Endothelial cell of umbilical vein (primary cell): ENCODE measurements at regions of chr17 and their contacts with region 1.

Region 1: DNA sequence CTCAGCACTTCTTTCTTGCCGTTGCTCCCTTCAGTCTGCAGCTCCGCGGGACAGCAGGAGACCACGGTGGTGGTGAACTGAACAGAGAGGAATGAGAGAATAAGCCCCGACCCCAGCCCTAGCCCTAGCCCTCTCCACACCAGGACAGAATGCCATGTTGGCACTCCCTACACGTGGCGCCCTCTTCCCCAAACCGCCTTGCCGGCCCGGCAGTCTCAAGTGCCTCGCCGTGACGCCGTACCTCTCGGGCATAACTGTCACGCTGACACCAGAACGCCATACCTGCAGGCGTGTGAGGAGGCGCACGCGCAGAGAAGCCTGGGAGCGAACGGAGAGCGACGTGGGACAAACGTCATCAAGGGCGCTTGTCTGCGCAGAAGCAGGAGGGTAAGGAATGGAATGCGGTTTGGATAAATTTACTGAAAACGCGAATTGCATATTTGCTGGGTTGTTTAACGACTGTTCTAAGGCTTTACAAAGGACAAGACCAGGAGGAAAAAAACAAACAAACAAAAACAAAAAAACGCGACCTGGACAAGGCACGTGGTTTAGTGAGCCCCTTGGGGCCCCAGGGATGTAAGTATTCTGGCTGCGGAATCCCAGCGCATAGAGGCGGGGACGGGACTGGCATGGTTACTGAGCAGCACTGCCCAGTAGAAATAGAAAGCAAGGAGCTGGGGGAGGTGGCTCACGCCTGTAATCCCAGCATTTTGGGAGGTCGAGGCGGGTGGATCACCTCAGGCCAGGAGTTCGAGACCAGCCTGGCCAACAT is at the start of gene AARSD1:
- DNase-seq: peak; percentile 97
- H3K4me3 ChIP-seq: peak within 1 kb of the TSS; percentile 47 to 83 (median 63)
- H3K27ac ChIP-seq: peak within 1 kb of the TSS; percentile 64
- H3K4me1 ChIP-seq: peaks cover 6% of the 10 kb centered on the region
- H3K27me3 ChIP-seq: no peaks in the 10 kb centered on the region
- CTCF ChIP-seq: no peak
- POLR2A ChIP-seq: peak; percentile 85
- total RNA-seq, gene AARSD1: 39.7 and 53.2 TPM in 2 replicates

Region 2: DNA sequence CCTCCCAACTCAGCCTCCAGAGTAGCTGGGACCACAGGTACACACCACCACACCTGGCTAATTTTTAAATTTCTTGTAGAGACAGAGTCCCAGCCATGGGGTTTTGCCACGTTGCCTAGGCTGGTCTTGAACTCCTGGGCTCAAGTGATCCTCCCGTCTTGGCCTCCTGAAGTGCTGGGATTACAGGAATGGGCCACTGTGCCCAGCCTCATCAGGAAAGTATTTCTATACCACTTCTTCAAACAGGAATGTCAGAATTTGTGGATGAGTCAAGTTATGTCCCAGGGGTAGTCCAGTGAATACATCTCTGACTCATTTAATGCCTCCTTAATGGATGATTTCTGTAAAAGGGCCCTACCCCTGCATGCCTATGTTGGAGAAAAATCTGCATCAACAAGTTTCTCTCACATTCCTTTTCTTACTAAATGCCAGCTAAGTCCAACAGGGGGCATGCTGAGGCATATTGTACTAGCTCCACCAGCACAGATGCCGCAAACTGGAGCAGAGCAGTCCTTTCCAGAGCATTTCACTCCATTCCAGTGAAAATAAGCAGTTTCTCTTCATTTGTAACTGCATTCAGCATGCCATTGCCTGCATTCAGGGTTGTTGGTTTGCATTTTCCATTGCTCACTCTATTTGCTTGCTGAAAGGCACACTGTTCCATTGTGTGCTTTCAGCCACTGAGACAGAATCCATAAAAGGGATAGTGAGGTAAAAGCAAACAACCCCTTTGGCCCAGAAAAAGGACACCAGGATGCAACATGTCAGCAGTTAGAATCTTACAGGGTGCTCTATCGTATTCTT is 536.0 kb before region 1 on chr17:
- CTCF ChIA-PET with region 1: no interaction called
- POLR2A ChIA-PET with region 1: no interaction called
- dilution Hi-C with region 1: no loop called
- intact Hi-C with region 1: no loop called
- DNase-seq: peak; percentile 85
- H3K4me3 ChIP-seq: no peak overlapping the region
- H3K27ac ChIP-seq: no peak overlapping the region
- H3K4me1 ChIP-seq: peaks cover 5% of the 10 kb centered on the region
- H3K27me3 ChIP-seq: no peaks in the 10 kb centered on the region
- CTCF ChIP-seq: peak; percentile 71 to 76
- POLR2A ChIP-seq: no peak

Region 3: DNA sequence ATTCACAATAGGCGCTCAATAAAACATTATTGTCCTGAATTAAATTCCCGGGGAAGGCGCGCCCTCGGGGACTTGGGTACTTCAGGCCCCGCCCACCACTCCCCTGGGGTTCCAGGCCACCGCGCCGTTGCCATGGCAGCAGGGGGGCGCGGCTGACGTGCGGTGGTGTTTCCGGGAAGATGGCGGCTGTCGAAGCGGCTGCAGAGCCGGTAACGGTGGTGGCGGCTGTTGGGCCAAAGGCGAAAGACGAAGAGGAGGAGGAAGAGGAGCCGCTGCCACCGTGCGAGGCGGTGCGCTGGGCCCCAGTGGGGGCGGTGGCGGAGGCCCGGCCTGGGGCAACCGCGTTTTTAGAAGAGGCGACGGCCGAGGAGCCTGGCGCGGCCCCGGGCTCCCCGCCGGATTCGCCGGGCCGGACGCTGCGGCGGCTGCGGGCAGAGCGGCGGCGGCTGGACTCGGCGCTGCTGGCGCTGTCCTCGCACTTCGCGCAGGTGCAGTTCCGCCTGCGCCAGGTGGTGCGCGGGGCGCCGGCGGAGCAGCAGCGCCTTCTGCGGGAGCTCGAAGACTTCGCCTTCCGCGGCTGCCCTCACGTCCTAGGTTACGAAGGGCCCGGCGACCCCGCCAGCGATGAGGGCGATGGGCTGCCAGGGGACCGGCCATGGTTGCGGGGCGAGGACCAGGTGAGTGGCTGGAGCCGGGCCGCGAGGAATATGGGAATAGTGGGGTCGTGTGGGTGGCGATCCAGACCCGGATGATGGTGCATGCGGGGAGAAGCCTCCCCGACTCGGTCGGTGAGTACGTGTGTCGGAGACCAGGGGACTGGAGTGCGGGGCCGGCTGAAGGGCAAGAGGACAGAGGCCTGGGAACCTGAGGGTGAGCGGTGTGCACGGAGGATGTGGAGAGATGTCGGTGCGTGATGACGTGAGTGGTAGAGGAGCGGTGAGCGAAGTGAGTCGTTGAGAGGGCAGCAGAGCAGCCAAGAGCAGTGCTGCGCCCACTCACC is 16.4 kb after region 1 on chr17 and contains the start of gene RUNDC1:
- CTCF ChIA-PET with region 1: interaction called, 3 read pairs
- POLR2A ChIA-PET with region 1: no interaction called
- dilution Hi-C with region 1: no loop called
- intact Hi-C with region 1: loop called (anchors 1 kb)
- DNase-seq: peak; percentile 85
- H3K4me3 ChIP-seq: peak within 1 kb of the TSS; percentile 10 to 88 (median 11)
- H3K27ac ChIP-seq: peak within 1 kb of the TSS; percentile 1
- H3K4me1 ChIP-seq: peaks cover 23% of the 10 kb centered on the region
- H3K27me3 ChIP-seq: no peaks in the 10 kb centered on the region
- CTCF ChIP-seq: no peak
- POLR2A ChIP-seq: peak; percentile 79
- total RNA-seq, gene RUNDC1: 11.7 and 12.0 TPM in 2 replicates

Region 4: GRCh38 chr17:43006639-43007551 is 42.5 kb after region 1 on chr17 and contains the start of gene IFI35:
- CTCF ChIA-PET with region 1: no interaction called
- POLR2A ChIA-PET with region 1: no interaction called
- dilution Hi-C with region 1: no loop called
- intact Hi-C with region 1: no loop called
- DNase-seq: peak; percentile 90
- H3K4me3 ChIP-seq: peak within 1 kb of the TSS; percentile 65 to 77 (median 65)
- H3K27ac ChIP-seq: peak within 1 kb of the TSS; percentile 53
- H3K4me1 ChIP-seq: peaks cover 5% of the 10 kb centered on the region
- H3K27me3 ChIP-seq: no peaks in the 10 kb centered on the region
- CTCF ChIP-seq: peak; percentile 32 to 48
- POLR2A ChIP-seq: peak; percentile 61
- total RNA-seq, gene IFI35: 9.4 and 11.1 TPM in 2 replicates